ENCODE measurements at regions of chr1 and their contacts with region 1.

Region 1: DNA sequence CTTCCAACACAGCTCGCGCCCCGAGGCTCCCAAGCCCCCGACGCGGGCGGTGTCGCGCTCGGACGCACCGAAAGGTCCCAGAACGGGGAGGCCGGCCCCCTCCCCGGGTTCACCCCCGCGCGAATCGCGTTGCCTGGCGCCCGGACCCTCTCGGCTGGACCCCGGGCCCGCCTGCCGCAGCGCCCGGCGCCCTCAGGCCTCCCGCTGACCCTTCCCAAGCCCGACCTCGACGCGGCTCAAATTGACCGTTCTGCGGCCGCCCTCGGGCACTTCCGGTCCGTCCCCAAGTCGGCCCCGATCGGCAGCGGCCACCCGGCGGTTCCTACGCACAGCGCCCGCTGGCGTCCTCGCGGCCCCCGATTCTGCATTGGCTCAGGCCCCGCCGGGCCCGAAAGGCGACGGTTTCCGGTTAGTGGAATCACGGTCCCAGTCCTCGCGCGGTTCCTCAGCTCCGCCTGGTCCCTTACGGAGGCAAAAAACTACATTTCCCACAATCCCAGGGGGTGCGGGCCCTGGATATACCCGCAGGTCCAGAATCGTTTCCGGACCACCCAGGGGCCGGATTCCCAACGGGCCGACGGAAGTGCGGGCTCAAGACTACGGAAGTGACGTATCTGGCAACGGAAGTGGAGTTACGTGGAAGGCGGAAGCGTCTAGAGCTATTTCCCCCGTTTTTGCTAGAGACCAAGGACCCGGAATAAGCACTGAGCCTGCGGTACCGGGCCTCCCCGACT is at the start of gene AURKAIP1:
- DNase-seq: peak; percentile 97 to 99 (median 98)
- H3K4me3 ChIP-seq: peak within 1 kb of the TSS; percentile 100
- H3K27ac ChIP-seq: peak within 1 kb of the TSS; percentile 87 to 88
- H3K4me1 ChIP-seq: peaks cover 7% of the 10 kb centered on the region
- H3K27me3 ChIP-seq: no peaks in the 10 kb centered on the region
- CTCF ChIP-seq: peak in 2 of 3 donors; percentile 51 to 63
- EP300 ChIP-seq: peak; percentile 87
- POLR2A ChIP-seq: peak; percentile 32
- total RNA-seq, gene AURKAIP1: 63.7 to 94.0 (median 73.2) TPM

Region 2: GRCh38 chr1:1115786-1116700 is 259.1 kb before region 1 on chr1 and contains the start of gene C1orf159:
- intact Hi-C with region 1: loop called in 1 of 4 experiments (anchors 10 kb)
- DNase-seq: peak; percentile 98 to 99 (median 98)
- H3K4me3 ChIP-seq: peak within 1 kb of the TSS; percentile 47
- H3K27ac ChIP-seq: peak within 1 kb of the TSS in 1 of 2 donors; percentile 72
- H3K4me1 ChIP-seq: peaks cover 3% of the 10 kb centered on the region
- H3K27me3 ChIP-seq: no peaks in the 10 kb centered on the region
- CTCF ChIP-seq: no peak
- EP300 ChIP-seq: no peak
- POLR2A ChIP-seq: no peak
- total RNA-seq, gene C1orf159: 5.3 to 22.1 (median 10.7) TPM

Region 3: DNA sequence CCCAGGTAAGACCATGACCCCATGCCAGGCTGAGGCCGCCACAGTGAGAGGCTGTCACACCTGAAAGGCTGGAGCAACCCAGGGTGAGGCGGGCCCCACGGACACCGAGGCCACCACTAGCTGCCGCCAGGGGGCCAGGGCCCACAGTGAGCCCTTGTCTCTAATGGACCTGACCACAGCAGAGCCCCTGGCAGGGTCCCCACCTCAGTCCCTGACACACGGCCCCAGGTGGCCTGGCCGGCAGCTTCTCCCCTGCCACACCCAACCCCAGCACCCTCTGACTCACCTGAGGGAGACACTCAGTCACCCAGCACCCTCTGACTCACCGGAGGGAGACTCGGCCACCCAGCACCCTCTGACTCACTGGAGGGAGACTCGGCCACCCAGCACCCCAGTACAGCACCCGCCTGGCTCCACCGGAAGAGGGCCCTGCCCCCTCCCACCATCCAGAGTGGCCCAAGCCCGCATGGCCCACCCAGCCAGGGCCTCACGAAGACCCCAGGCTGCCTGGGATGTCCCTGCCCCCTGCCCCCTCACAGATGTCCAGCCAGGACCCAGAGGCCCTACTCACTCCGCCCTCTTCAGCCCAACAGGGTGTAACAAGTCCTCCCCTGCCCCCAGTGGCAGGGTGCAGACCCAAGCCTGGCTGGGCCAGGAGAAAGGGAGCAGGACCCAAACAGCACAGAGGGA is 30.3 kb before region 1 on chr1:
- intact Hi-C with region 1: no loop called
- DNase-seq: no peak
- H3K4me3 ChIP-seq: no peak overlapping the region
- H3K27ac ChIP-seq: no peak overlapping the region
- H3K4me1 ChIP-seq: peaks cover 26% of the 10 kb centered on the region
- H3K27me3 ChIP-seq: no peaks in the 10 kb centered on the region
- CTCF ChIP-seq: no peak
- EP300 ChIP-seq: no peak
- POLR2A ChIP-seq: no peak

Region 4: DNA sequence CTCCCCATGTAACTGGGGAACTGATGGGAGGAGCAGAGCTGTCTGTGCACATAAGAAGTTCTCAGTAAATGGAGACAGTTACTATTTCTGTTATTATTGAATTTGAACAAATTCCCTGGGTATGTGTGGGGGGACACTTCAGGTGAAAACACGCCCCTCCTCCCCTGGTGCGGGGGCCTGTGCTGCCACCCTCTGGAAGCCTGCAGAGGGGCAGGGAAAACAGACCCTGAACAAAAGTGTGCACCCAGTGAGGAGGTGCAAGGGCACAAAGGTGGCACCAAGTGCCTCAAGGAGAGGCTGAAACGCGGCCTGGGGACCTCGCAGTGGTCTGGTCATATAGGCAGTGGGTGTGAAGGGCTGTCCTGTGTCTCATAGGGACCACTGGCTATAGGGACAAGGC is 421.4 kb after region 1 on chr1:
- intact Hi-C with region 1: no loop called
- DNase-seq: no peak
- H3K4me3 ChIP-seq: no peak overlapping the region
- H3K27ac ChIP-seq: no peak overlapping the region
- H3K4me1 ChIP-seq: no peaks in the 10 kb centered on the region
- H3K27me3 ChIP-seq: no peaks in the 10 kb centered on the region
- CTCF ChIP-seq: no peak
- EP300 ChIP-seq: no peak
- POLR2A ChIP-seq: no peak